ENCODE measurements at regions of chr9 and their contacts with region 1.

Region 1: GRCh38 chr9:21812946-21813568 is 10.6 kb downstream of the MTAP start:
- DNase-seq: peak; percentile 79
- H3K4me3 Mint-ChIP-seq: no peak overlapping the region
- H3K27ac Mint-ChIP-seq: no peak overlapping the region
- H3K4me1 Mint-ChIP-seq: peaks cover 49% of the 10 kb centered on the region
- H3K27me3 Mint-ChIP-seq: no peaks in the 10 kb centered on the region

Region 2: GRCh38 chr9:21334701-21335632 is 478.1 kb before region 1 on chr9 and contains the start of gene KLHL9:
- CTCF ChIA-PET with region 1: no interaction called
- POLR2A ChIA-PET with region 1: no interaction called
- intact Hi-C with region 1: no loop called
- DNase-seq: peak; percentile 92
- H3K4me3 Mint-ChIP-seq: peak within 1 kb of the TSS; percentile 86
- H3K27ac Mint-ChIP-seq: peak within 1 kb of the TSS; percentile 87
- H3K4me1 Mint-ChIP-seq: peaks cover 50% of the 10 kb centered on the region
- H3K27me3 Mint-ChIP-seq: no peaks in the 10 kb centered on the region
- total RNA-seq, gene KLHL9: 15.9 to 16.0 TPM

Region 3: GRCh38 chr9:21709464-21710058 is 103.5 kb before region 1 on chr9:
- CTCF ChIA-PET with region 1: no interaction called
- POLR2A ChIA-PET with region 1: no interaction called
- intact Hi-C with region 1: no loop called
- DNase-seq: peak; percentile 65
- H3K4me3 Mint-ChIP-seq: no peak overlapping the region
- H3K27ac Mint-ChIP-seq: no peak overlapping the region
- H3K4me1 Mint-ChIP-seq: peaks cover 7% of the 10 kb centered on the region
- H3K27me3 Mint-ChIP-seq: no peaks in the 10 kb centered on the region

Region 4: DNA sequence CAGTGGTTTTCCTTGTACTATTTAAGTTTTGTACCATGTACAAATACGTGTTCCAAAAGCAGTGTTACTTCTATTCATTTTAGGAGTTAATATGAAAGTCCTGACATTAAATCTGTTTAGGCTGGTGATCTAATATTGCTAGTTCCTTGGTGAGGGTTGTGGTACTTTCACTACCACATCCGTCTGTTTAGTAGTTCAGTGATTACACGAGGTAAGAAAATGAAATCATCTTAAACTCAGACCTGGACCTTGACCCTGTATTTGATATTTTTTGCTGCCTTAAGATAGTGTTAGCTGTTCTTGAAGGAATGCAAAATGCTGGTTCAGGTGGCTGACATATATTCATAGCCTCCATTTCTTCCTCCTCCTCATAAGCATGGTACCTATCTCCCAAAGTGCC is 39.7 kb after region 1 on chr9:
- CTCF ChIA-PET with region 1: interaction called, 14 read pairs
- POLR2A ChIA-PET with region 1: interaction called, 4 read pairs
- intact Hi-C with region 1: no loop called
- DNase-seq: no peak
- H3K4me3 Mint-ChIP-seq: no peak overlapping the region
- H3K27ac Mint-ChIP-seq: no peak overlapping the region
- H3K4me1 Mint-ChIP-seq: peaks cover 31% of the 10 kb centered on the region
- H3K27me3 Mint-ChIP-seq: no peaks in the 10 kb centered on the region

Region 5: GRCh38 chr9:21974548-21975409 is 161.7 kb after region 1 on chr9:
- CTCF ChIA-PET with region 1: interaction called, 16 read pairs
- POLR2A ChIA-PET with region 1: no interaction called
- intact Hi-C with region 1: loop called (anchors 2 kb)
- DNase-seq: peak; percentile 70
- H3K4me3 Mint-ChIP-seq: peak overlapping the region; percentile 75
- H3K27ac Mint-ChIP-seq: no peak overlapping the region
- H3K4me1 Mint-ChIP-seq: peaks cover 13% of the 10 kb centered on the region
- H3K27me3 Mint-ChIP-seq: peaks cover 71% of the 10 kb centered on the region

Region 6: GRCh38 chr9:22008736-22009562 is 195.9 kb after region 1 on chr9 and contains the start of gene CDKN2B:
- CTCF ChIA-PET with region 1: interaction called, 118 read pairs
- POLR2A ChIA-PET with region 1: interaction called, 3 read pairs
- intact Hi-C with region 1: loop called (anchors 1 kb)
- DNase-seq: peak; percentile 84
- H3K4me3 Mint-ChIP-seq: peak within 1 kb of the TSS; percentile 81
- H3K27ac Mint-ChIP-seq: no peak within 1 kb of the TSS
- H3K4me1 Mint-ChIP-seq: peaks cover 24% of the 10 kb centered on the region
- H3K27me3 Mint-ChIP-seq: peaks cover 54% of the 10 kb centered on the region
- total RNA-seq, gene CDKN2B: 0.05 to 0.10 TPM

Region 7: DNA sequence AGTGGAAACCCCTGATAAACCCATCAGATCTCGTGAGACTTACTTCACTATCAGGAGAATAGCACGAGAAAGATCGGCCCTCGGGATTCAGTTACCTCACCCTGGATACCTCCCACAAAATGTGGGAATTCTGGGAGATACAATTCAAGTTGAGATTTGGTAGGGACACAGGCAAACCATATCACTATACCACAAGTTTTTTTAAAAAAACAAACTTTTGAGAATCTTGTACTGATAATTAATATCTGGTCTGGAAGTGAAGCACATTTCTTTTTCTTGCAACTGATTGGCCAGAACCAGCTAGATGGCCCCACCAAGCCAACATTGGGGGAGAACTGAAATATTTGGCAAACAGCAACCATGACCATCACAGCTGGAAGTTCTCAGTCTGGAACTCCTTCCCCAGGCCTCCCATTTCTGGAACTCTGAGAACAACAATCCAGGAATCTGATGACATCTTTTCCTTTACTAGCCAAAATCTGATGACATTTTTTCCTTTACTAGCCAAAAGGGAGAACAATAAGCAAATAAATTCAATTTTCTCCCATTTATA is 247.8 kb after region 1 on chr9:
- CTCF ChIA-PET with region 1: no interaction called
- POLR2A ChIA-PET with region 1: no interaction called
- intact Hi-C with region 1: no loop called
- DNase-seq: no peak
- H3K4me3 Mint-ChIP-seq: no peak overlapping the region
- H3K27ac Mint-ChIP-seq: no peak overlapping the region
- H3K4me1 Mint-ChIP-seq: peaks cover 18% of the 10 kb centered on the region
- H3K27me3 Mint-ChIP-seq: peaks cover 11% of the 10 kb centered on the region

Region 8: GRCh38 chr9:22105005-22105722 is 292.1 kb after region 1 on chr9:
- CTCF ChIA-PET with region 1: interaction called, 5 read pairs
- POLR2A ChIA-PET with region 1: no interaction called
- intact Hi-C with region 1: loop called (anchors 1 kb)
- DNase-seq: peak; percentile 60
- H3K4me3 Mint-ChIP-seq: no peak overlapping the region
- H3K27ac Mint-ChIP-seq: no peak overlapping the region
- H3K4me1 Mint-ChIP-seq: peaks cover 29% of the 10 kb centered on the region
- H3K27me3 Mint-ChIP-seq: peaks cover 32% of the 10 kb centered on the region

Region 9: GRCh38 chr9:22244141-22245011 is 431.3 kb after region 1 on chr9:
- CTCF ChIA-PET with region 1: interaction called, 45 read pairs
- POLR2A ChIA-PET with region 1: no interaction called
- intact Hi-C with region 1: loop called (anchors 1 kb)
- DNase-seq: peak; percentile 48
- H3K4me3 Mint-ChIP-seq: no peak overlapping the region
- H3K27ac Mint-ChIP-seq: no peak overlapping the region
- H3K4me1 Mint-ChIP-seq: peaks cover 20% of the 10 kb centered on the region
- H3K27me3 Mint-ChIP-seq: peaks cover 16% of the 10 kb centered on the region

Measured in activated CD4-positive, alpha-beta memory T cell treated with anti-CD3 and anti-CD28 coated beads for 36 hours (primary cell).